Common myeloid progenitor, CD34-positive (primary cell): ENCODE measurements at regions of chr7 and their contacts with region 1.

Region 1: GRCh38 chr7:4631664-4632171 is 50.4 kb upstream of the FOXK1 start:
- DNase-seq: peak; percentile 69 to 83 (median 79)
- H3K4me3 ChIP-seq: no peak overlapping the region
- H3K27ac ChIP-seq: no peak overlapping the region
- H3K4me1 ChIP-seq: peaks cover 0 to 24% (median 10%) of the 10 kb centered on the region in 4 experiments
- H3K27me3 ChIP-seq: no peaks in the 10 kb centered on the region

Region 2: GRCh38 chr7:4610768-4611467 is 20.8 kb before region 1 on chr7:
- CTCF ChIA-PET with region 1: interaction called, 23 read pairs
- POLR2A ChIA-PET with region 1: no interaction called
- DNase-seq: peak; percentile 75 to 85 (median 82)
- H3K4me3 ChIP-seq: no peak overlapping the region
- H3K27ac ChIP-seq: no peak overlapping the region
- H3K4me1 ChIP-seq: peaks cover 2 to 31% (median 23%) of the 10 kb centered on the region in 4 experiments
- H3K27me3 ChIP-seq: no peaks in the 10 kb centered on the region